ENCODE measurements at regions of chr20 and their contacts with region 1.

Region 1: GRCh38 chr20:59087829-59088433 is 45.3 kb upstream of the PRELID3B start:
- DNase-seq: peak; percentile 94
- H3K4me3 Mint-ChIP-seq: no peak overlapping the region
- H3K27ac Mint-ChIP-seq: no peak overlapping the region
- H3K4me1 Mint-ChIP-seq: peaks cover 2% of the 10 kb centered on the region
- H3K27me3 Mint-ChIP-seq: no peaks in the 10 kb centered on the region

Region 2: GRCh38 chr20:58675146-58675584 is 412.8 kb before region 1 on chr20:
- CTCF ChIA-PET with region 1: no interaction called
- intact Hi-C with region 1: no loop called
- DNase-seq: no peak
- H3K4me3 Mint-ChIP-seq: no peak overlapping the region
- H3K27ac Mint-ChIP-seq: no peak overlapping the region
- H3K4me1 Mint-ChIP-seq: peaks cover 2% of the 10 kb centered on the region
- H3K27me3 Mint-ChIP-seq: no peaks in the 10 kb centered on the region

Region 3: DNA sequence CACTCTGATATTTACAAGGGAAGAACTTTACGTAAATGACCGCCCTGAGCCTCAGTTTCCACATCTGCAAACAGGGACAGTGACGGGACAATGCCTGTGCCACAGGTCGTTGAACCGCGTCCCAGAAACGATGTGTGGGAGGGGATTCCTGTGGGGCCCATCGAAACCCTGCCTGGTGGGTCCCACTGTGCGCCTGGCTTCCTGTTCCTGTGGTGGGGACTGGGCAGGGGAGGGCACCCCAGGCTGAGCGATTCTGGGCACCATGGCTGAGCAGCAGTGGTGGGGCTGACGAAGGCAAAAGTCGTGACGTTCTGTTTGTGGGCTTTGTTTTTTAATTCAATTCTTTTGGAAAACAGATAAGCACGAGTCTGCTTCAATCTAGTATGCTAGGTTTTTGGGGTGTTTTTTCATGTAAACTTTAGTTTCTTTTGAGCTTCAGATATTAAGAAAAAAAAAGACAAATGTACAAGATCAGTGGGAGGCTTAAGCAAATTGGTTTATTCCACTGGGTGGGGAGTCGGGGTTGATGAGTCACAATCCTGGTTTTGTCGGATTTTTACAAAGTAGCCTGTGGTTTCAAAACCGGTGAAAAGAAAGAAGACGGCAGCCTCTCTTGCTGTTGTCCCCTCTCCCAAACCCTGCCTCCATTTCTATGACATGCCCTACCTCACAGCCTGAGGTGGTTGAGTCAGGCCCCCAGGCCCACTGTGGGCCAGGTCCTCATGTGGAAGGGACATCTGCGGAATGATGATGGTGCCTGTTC is 277.6 kb before region 1 on chr20:
- CTCF ChIA-PET with region 1: no interaction called
- intact Hi-C with region 1: no loop called
- DNase-seq: no peak
- H3K4me3 Mint-ChIP-seq: no peak overlapping the region
- H3K27ac Mint-ChIP-seq: no peak overlapping the region
- H3K4me1 Mint-ChIP-seq: no peaks in the 10 kb centered on the region
- H3K27me3 Mint-ChIP-seq: peaks cover 2% of the 10 kb centered on the region

Region 4: DNA sequence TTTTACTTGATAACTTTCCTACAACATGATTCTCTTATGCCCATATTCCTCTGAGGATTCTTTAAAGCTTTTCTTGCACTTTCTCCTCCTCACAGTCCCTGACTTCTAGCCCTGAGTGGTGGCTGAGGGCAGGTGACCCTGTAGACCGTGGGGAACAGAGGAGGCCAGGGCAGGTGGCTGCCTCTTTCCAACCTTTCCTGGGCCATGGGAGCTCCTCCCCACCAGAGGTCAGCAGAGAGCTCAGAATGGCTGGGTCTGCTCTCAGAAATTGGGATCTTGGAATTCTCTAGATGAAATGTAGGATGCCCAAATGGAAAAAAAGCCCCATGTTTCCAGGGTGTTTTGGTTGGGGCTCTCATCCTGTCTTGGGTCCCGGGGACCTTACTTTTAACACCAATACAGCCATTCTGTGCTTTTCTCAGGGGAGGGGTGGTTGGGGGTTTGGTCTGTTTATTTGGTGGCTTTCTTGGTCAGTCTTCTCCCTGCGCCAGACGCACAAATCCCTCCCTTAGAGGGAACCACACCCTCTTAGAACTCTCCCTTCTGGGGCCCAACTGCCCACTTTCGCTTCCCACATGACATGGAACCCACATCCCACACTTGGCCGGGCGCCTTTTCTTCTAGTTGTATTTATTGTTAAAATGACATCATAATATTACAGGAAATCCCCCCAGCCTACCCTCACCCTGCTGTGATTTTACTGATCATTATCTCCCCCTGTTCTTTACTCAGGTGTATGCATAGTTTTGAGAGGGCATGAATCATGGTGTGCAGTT is 217.5 kb before region 1 on chr20:
- CTCF ChIA-PET with region 1: interaction called, 6 read pairs
- intact Hi-C with region 1: loop called (anchors 5 kb)
- DNase-seq: peak; percentile 67
- H3K4me3 Mint-ChIP-seq: no peak overlapping the region
- H3K27ac Mint-ChIP-seq: no peak overlapping the region
- H3K4me1 Mint-ChIP-seq: peaks cover 4% of the 10 kb centered on the region
- H3K27me3 Mint-ChIP-seq: no peaks in the 10 kb centered on the region

Region 5: DNA sequence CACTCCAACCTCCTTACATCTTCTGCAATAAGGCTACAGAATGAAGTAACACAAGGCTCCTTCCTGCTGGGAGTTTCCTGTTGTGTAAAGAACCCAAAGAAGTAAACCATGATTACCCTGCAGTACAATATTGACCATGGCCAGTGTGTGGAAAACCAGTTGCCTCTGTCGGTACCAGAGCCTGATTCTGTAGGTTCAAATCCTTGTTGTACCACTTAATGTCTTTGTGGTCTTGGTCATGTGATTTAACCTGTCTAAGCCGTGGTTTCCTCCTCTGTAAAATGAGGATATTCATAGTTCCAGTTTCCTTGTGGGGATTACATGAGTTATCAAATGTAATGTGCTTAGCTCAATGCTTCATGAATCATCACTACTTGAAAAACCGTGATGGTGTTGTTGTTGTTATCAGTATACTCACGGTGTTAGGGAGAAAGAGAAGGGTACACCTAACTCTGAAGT is 14.9 kb after region 1 on chr20:
- CTCF ChIA-PET with region 1: interaction called, 14 read pairs
- intact Hi-C with region 1: no loop called
- DNase-seq: no peak
- H3K4me3 Mint-ChIP-seq: no peak overlapping the region
- H3K27ac Mint-ChIP-seq: peak overlapping the region; percentile 6
- H3K4me1 Mint-ChIP-seq: peaks cover 17% of the 10 kb centered on the region
- H3K27me3 Mint-ChIP-seq: no peaks in the 10 kb centered on the region

Region 6: DNA sequence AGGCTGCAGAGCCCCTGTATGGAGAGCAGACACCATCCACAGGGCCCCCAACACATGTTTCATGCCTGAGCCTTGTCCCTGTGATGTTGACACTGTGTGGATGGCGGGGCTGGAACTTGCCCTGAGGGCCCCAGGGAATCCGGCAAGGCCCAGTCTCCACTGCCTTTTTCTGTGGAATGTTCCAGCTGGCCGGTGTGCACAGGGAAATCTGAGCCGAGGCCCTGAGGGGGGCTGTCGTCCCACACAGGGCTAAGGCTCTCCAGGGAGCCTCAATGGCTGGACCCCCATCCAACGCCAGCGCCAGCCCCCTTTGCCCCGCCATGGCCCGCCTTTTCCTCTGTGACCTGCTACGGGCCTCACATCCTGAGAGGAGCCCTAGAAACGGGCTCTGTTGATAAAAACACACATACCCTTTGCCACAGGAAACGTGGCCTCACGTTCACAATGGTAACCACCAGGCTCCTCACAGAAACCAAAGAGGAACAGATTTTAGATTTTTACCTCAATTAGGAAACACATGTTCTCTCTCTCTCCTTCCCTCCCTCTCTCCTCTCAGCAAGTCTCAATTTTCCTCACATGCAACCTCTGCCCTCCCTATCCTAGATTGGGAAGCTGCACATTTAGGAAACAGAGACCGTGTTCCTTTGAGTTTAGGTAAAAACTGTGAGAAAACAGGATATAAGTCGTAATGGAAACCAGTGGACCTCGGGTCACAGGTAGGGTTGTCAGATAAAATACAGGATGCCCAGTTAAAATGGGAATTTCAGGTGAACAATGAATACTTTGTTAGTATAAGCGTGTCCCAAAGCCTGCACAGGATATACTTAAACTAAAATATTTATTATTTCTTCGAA is 61.9 kb after region 1 on chr20:
- CTCF ChIA-PET with region 1: interaction called, 11 read pairs
- intact Hi-C with region 1: no loop called
- DNase-seq: peak; percentile 84
- H3K4me3 Mint-ChIP-seq: peak overlapping the region; percentile 30
- H3K27ac Mint-ChIP-seq: peak overlapping the region; percentile 82
- H3K4me1 Mint-ChIP-seq: peaks cover 88% of the 10 kb centered on the region
- H3K27me3 Mint-ChIP-seq: no peaks in the 10 kb centered on the region

Region 7: GRCh38 chr20:59222253-59223181 is 134.6 kb after region 1 on chr20:
- CTCF ChIA-PET with region 1: interaction called, 35 read pairs
- intact Hi-C with region 1: loop called (anchors 1 kb)
- DNase-seq: peak; percentile 86
- H3K4me3 Mint-ChIP-seq: peak overlapping the region; percentile 69
- H3K27ac Mint-ChIP-seq: peak overlapping the region; percentile 37
- H3K4me1 Mint-ChIP-seq: peaks cover 21% of the 10 kb centered on the region
- H3K27me3 Mint-ChIP-seq: no peaks in the 10 kb centered on the region

Region 8: GRCh38 chr20:59495894-59496510 is 408.1 kb after region 1 on chr20:
- CTCF ChIA-PET with region 1: interaction called, 4 read pairs
- intact Hi-C with region 1: loop called (anchors 2 kb)
- DNase-seq: peak; percentile 77
- H3K4me3 Mint-ChIP-seq: no peak overlapping the region
- H3K27ac Mint-ChIP-seq: no peak overlapping the region
- H3K4me1 Mint-ChIP-seq: no peaks in the 10 kb centered on the region
- H3K27me3 Mint-ChIP-seq: peaks cover 10% of the 10 kb centered on the region